ENCODE measurements at regions of chr4 and their contacts with region 1.

Region 1: DNA sequence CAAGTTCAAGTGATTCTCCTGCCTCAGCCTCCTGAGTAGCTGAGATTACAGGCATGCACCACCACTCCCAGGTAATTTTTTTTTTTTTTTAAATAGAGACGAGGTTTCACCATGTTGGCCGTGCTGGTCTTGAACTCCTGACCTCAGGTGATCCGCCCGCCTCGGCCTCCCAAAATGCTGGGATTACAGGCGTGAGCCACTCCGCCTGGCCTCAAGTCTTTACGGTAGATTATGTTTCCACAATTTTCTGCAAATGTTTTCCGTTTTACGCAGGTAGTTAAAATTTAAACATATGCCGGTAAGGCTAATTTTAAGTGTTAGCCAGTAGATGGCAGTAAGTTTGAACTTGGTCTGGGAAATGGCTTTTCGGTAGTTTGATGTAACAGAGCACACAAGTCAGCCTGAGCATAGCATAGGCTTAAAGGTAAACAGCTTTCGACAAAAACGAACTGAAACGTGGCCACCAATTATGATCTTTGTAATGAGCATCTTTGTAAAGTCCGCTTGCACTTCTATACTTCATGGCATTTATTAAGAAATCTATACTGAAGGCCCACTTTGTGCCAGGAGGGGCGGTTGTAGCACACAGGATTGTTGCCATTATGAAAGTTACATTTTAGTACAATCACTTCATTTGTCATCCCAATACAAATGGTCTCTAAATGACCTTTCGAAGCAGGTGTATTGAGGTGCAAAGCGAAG is 31.1 kb downstream of the CCKAR start:
- DNase-seq: peak; percentile 66
- CTCF ChIP-seq: peak; percentile 38

Region 2: DNA sequence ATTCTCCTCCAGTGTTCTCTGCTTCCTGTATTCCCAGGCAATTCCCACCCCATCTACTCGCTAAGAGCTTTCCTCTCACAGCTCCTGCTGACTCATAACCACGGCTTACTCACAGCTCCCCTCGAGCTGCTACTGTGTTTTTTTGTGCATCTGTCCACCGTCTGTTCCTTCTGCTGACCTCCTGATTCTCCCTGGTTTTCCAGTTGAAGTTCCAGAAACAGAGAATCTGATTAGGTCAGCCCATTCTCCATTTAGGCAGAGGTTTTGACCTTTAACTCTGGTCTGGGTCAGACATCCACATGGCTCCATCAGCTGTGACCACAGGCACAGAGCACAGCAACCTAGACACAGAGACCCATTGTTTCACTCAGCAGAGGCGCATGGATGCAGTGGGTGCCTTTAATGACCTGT is 550.7 kb before region 1 on chr4:
- in situ Hi-C with region 1: no loop called
- DNase-seq: no peak
- CTCF ChIP-seq: no peak

Region 3: DNA sequence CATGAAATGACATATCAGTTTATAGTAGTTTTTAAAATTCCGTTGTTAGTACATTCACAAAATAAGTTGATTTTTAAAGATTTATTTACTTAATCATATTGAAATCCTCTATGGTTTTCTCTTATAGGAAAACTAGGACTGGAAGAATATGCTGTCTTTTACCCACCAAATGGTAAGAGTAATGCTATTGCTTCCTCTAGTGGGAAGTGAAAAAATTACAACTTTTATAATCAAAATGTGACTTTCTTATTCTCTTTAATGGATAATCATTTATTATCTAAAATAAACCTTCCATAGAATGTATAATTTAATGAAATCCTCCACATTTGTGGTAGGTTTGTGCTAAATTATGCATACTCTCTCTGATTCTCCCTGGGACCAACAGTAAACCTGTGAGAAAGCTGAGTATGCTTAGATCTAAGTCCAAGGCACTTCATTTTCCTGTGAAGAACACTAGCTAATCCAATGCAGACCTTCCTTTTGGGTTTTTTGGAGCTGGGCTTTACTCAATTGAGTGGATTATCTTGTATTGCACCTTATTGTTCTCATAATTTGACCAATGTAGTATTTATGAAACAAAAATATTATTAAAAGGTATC is 260.8 kb after region 1 on chr4:
- in situ Hi-C with region 1: loop called (anchors 25 kb)
- DNase-seq: no peak
- CTCF ChIP-seq: no peak

Region 4: DNA sequence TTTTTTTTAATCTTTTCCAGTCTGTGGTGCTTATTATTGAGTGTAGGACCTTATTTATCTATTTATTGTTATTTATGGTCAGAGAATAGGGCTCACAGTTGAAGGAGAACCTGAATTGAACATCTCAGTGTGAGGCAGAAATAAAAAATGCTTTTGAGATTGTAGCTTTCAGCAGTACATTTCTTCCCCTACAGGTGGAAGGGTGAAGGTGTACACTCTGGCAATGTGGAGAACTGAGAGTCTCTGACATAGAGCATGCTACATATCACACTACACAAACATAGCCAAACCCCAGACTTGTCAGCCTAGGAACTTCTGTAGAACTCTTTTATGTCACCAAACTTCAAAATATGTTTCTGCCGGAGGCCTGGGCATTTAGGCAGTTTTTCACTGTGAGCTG is 541.6 kb after region 1 on chr4:
- in situ Hi-C with region 1: loop called (anchors 10 kb)
- DNase-seq: no peak
- CTCF ChIP-seq: peak; percentile 51